GM23248 (cell line): ENCODE measurements at regions of chr3 and their contacts with region 1.

Region 1: DNA sequence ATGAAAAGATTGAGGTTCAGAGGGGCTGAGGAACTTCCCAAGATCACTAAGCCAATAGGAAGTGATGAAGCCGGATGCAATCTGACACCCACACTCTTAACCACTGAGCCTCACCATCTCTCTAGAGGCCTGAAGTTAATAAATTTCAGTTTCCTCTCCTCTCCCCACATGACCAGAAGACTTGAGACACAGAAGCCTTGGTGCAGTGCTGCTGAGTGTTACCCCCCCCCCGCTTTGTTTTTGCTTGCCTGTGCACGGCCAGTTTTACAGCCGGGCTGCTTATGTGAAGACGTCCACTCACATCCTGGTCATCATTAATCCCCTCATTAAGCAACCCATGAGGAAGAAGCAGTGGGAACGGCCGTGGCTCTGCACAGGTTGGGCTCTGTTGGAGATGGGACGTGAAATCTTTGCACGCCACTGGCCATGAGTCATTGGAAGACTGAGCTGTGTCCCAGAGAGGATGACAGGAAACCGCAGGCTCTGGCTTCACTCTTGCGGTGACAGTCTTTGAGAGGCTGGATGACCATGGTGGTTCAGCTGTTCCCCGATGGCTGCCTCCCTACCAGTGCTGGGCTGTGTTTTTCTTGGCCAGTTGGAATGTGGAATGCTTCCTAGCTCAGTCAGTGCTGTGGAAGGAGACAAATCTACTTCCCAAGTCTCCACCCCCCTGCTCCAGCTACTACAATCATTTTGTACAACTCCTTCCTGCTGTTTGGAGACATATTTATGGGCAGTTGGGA is 232.6 kb upstream of the LRTM1 start:
- DNase-seq: peak; percentile 99
- H3K4me3 ChIP-seq: peak overlapping the region; percentile 26; the same call in 1 of the 2 replicates
- H3K27ac ChIP-seq: peak overlapping the region; percentile 98
- H3K4me1 ChIP-seq: peaks cover 70% of the 10 kb centered on the region
- H3K27me3 ChIP-seq: no peaks in the 10 kb centered on the region

Region 2: GRCh38 chr3:54882129-54882833 is 278.1 kb before region 1 on chr3:
- in situ Hi-C with region 1: loop called (anchors 10 kb)
- DNase-seq: peak; percentile 99
- H3K4me3 ChIP-seq: no peak overlapping the region
- H3K27ac ChIP-seq: peak overlapping the region; percentile 86
- H3K4me1 ChIP-seq: peaks cover 39% of the 10 kb centered on the region
- H3K27me3 ChIP-seq: no peaks in the 10 kb centered on the region

Region 3: GRCh38 chr3:54905230-54905888 is 255.1 kb before region 1 on chr3:
- in situ Hi-C with region 1: no loop called
- DNase-seq: peak; percentile 67
- H3K4me3 ChIP-seq: peak overlapping the region; percentile 6; the same call in 1 of the 2 replicates
- H3K27ac ChIP-seq: no peak overlapping the region
- H3K4me1 ChIP-seq: peaks cover 31% of the 10 kb centered on the region
- H3K27me3 ChIP-seq: no peaks in the 10 kb centered on the region

Region 4: GRCh38 chr3:54951405-54951804 is 209.0 kb before region 1 on chr3:
- in situ Hi-C with region 1: loop called (anchors 10 kb)
- DNase-seq: peak; percentile 97
- H3K4me3 ChIP-seq: no peak overlapping the region
- H3K27ac ChIP-seq: peak overlapping the region; percentile 35
- H3K4me1 ChIP-seq: peaks cover 35% of the 10 kb centered on the region
- H3K27me3 ChIP-seq: no peaks in the 10 kb centered on the region

Region 5: GRCh38 chr3:55364456-55364855 is 204.0 kb after region 1 on chr3:
- in situ Hi-C with region 1: no loop called
- DNase-seq: peak; percentile 69
- H3K4me3 ChIP-seq: no peak overlapping the region
- H3K27ac ChIP-seq: peak overlapping the region; percentile 52
- H3K4me1 ChIP-seq: peaks cover 50% of the 10 kb centered on the region
- H3K27me3 ChIP-seq: no peaks in the 10 kb centered on the region

Region 6: GRCh38 chr3:55485211-55485791 is 324.9 kb after region 1 on chr3:
- in situ Hi-C with region 1: loop called (anchors 10 kb)
- DNase-seq: peak; percentile 82
- H3K4me3 ChIP-seq: peak overlapping the region; percentile 97
- H3K27ac ChIP-seq: peak overlapping the region; percentile 86
- H3K4me1 ChIP-seq: peaks cover 7% of the 10 kb centered on the region; the same call in 1 of the 2 replicates
- H3K27me3 ChIP-seq: no peaks in the 10 kb centered on the region

Region 7: DNA sequence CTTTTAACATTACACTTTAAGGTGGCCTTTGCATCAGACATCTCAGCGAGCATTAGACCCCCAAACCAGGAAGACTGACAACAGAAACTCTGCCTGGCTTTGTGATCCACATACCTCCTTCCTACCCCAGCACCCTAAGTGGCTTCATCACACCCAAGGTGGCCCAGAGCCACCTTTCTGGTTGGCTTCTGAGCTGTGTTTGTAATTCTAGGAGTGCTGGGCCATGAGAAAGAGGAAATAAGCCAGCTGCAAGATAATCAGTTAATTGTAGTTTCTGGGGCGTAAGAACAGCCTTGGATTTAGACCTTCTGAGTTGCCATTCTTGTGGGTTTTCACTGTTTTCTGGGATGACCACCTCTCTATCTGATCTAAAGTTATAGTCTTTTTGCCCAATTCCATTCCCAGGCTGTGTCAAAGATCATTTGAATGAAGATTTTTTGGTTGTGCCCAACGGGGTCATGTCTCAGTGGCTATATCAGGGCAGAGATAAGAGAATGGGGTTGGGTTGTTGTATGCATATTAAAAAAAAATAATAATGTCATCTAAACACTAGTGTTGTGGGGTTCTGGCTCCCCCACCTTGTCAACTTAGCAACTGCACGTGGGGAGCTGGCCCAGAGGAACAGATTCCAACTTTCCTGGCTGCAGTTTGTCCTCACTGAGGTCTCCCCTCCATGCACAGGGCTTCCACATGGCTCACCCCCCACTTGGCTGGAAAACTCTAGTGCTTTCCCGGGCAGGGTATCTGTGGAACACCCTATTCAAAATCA is 561.5 kb after region 1 on chr3:
- in situ Hi-C with region 1: loop called (anchors 10 kb)
- DNase-seq: peak; percentile 71
- H3K4me3 ChIP-seq: no peak overlapping the region
- H3K27ac ChIP-seq: no peak overlapping the region
- H3K4me1 ChIP-seq: peaks cover 27% of the 10 kb centered on the region
- H3K27me3 ChIP-seq: no peaks in the 10 kb centered on the region